ENCODE measurements at regions of chr5 and their contacts with region 1.

Region 1: DNA sequence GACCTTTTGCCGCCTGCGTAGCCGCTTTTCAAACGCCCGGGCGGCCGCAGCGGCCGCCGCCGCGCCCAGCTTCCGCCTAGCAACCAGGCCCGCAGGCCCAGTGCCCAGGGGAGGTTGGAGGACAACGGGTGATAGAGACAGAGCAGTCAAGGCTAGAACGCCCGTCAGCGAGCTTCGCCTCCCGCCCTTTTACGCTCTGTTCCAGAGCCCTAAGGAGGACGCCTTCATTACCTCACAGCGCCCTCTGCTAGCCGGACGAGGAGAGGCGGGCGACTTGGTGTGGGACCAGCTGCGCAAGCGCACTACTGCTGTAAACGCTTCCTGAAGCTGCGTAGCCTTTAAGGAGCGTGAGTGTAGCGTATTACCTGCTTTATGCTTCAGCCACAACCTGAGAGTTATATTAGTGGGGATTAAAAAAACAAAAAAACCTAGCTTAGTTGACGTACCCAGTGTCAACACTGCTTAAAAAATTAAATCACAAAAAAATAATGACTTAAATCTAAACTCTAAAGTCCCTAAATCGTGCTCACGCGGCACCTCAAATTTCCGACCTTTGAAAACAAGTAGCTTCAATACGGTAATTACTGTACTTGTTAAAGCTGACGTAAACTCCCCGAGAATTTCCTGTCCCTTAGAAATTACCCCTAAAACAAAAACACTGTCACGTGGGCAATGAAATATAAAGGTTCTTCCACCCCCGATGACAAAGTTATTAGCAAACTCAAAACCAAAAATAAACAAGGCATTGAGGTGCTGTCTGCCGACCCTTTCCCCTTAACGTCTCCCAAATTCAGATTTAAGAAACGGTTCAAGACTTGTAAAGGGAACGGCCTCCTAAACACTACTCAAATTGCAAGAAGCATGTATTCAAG is at the start of gene CEP120:
- DNase-seq: peak; percentile 99
- H3K4me3 ChIP-seq: peak within 1 kb of the TSS; percentile 82
- H3K27ac ChIP-seq: peak within 1 kb of the TSS; percentile 72
- H3K27me3 ChIP-seq: no peaks in the 10 kb centered on the region
- CTCF ChIP-seq: peak; percentile 80
- polyA plus RNA-seq, gene CEP120: 20.0 and 27.2 TPM in 2 replicates

Region 2: GRCh38 chr5:122515709-122516431 is 907.6 kb before region 1 on chr5:
- CTCF ChIA-PET with region 1: interaction called, 12 read pairs
- POLR2A ChIA-PET with region 1: no interaction called
- DNase-seq: peak; percentile 57
- H3K4me3 ChIP-seq: no peak overlapping the region
- H3K27ac ChIP-seq: no peak overlapping the region
- H3K27me3 ChIP-seq: peaks cover 5% of the 10 kb centered on the region
- CTCF ChIP-seq: peak; percentile 85

Region 3: GRCh38 chr5:123433596-123433995 is 10.1 kb after region 1 on chr5:
- CTCF ChIA-PET with region 1: interaction called, 15 read pairs
- POLR2A ChIA-PET with region 1: no interaction called
- DNase-seq: no peak
- H3K4me3 ChIP-seq: no peak overlapping the region
- H3K27ac ChIP-seq: no peak overlapping the region
- H3K27me3 ChIP-seq: no peaks in the 10 kb centered on the region
- CTCF ChIP-seq: no peak

Region 4: DNA sequence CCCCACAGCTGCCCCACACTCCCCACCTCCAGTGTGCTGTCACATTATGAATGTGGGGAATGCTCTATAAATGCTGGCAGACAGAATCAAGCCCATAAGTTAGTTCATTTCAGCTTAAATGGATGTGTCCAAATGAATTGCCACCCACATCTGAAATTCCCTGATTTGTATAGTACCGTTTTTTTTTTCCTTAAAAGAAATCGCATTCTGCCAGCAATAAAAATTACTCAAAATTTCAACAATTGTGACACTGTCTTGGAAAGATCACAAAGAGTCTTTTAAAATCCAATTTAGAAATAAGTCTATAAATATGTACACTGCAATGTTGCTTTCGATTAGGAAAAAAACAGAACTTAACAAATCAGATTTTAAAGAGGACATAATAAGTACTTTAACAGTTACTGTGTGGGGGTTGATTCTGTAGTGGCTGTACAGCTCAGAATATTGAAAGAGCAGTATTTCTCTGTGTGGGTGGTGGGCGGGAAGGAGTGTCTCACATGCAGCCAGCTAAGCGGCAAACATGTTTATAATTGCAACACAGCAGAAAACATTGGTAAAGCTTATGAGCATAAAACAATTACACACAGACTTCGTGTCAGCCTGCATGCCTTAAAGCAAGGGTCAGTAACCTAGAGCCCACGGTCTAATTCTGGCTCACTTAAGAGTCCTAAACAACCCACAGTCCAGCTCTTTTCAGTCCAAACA is 63.6 kb after region 1 on chr5:
- CTCF ChIA-PET with region 1: interaction called, 11 read pairs
- POLR2A ChIA-PET with region 1: no interaction called
- DNase-seq: peak; percentile 6
- H3K4me3 ChIP-seq: no peak overlapping the region
- H3K27ac ChIP-seq: no peak overlapping the region
- H3K27me3 ChIP-seq: no peaks in the 10 kb centered on the region
- CTCF ChIP-seq: no peak

Region 5: GRCh38 chr5:123605822-123606221 is 182.3 kb after region 1 on chr5:
- CTCF ChIA-PET with region 1: interaction called, 82 read pairs
- POLR2A ChIA-PET with region 1: interaction called, 10 read pairs
- DNase-seq: no peak
- H3K4me3 ChIP-seq: no peak overlapping the region
- H3K27ac ChIP-seq: no peak overlapping the region
- H3K27me3 ChIP-seq: no peaks in the 10 kb centered on the region
- CTCF ChIP-seq: no peak

Region 6: DNA sequence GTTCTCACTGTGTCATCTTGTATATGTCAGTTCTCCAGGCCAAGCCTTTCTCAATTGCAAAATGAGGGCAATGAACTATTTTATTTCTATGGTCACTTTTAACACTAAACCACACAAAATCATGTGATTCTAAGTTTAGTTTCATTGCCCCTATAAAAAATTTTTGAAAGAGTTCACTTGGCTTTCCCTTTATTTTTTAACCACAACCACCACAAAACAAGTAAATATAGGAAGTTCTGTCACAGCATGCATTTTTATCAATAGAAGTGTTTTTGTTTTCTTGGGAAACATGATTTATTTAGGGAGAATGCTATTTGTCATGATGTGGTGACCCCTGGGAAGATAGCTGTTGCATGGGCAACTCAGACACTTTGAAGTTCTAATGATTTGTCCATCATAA is 257.5 kb after region 1 on chr5:
- CTCF ChIA-PET with region 1: no interaction called
- POLR2A ChIA-PET with region 1: no interaction called
- DNase-seq: no peak
- H3K4me3 ChIP-seq: no peak overlapping the region
- H3K27ac ChIP-seq: no peak overlapping the region
- H3K27me3 ChIP-seq: no peaks in the 10 kb centered on the region
- CTCF ChIP-seq: no peak